Gastrocnemius medialis (tissue), 4 donors: ENCODE measurements at regions of chr17 and their contacts with region 1.

Region 1: GRCh38 chr17:17591355-17592298 is at the start of gene PEMT:
- DNase-seq: peak; percentile 97 to 98
- ATAC-seq: peak; percentile 98
- H3K4me3 ChIP-seq: peak within 1 kb of the TSS; percentile 75 to 95 (median 86)
- H3K27ac ChIP-seq: peak within 1 kb of the TSS; percentile 83 to 94 (median 91)
- H3K4me1 ChIP-seq: peaks cover 19 to 22% of the 10 kb centered on the region in 2 donors
- H3K27me3 ChIP-seq: no peaks in the 10 kb centered on the region
- CTCF ChIP-seq: peak in 1 of 5 experiments; percentile 20
- POLR2A ChIP-seq: peak; percentile 60 to 66
- total RNA-seq, gene PEMT: 32.8 to 48.2 (median 34.2) TPM

Region 2: DNA sequence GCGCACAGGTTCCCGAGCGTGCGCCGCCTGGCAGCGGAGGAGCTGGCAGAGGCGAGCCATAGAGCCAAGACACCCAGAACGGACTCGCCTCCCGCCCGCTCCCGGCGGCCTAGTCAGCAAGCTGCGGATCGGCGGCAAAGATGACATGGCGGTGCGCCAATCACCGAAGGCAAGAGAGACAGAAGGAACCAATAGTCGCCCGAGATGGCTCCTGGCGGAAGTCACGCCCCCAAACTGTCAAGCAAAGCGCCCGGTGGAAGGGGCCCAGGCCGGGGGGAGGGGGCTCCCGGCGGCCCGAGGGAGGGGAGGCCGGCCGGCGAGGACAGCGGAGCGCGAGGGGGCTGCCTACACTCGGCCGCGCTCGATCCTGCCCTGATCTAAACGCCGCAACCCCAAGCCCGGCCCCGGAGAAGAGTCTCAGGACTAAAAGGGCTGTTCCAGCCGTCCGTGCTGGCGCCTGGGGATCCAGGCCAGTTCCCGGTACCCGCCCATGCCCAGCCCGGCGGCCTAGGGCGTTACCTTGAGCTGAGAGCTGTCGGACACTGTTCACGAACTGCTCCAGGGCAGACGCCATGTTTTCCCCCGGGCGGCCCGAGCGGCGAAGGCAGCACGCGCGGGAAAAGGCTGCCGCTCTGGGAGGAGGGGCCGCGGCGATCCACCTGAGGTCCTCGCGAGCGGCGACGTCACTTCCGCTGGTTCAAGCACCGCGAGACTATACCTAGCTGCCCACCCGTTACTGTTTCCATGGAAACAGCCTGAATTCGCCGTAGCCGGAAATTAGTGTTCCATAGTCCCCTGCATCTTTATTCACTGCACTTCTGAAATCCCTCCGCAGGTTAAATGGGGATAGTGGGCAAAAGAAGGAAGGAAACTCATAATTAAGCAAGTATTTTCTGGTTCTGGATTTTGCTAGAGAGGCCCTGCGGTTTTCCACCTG is 310.7 kb before region 1 on chr17 and contains the start of gene COPS3:
- in situ Hi-C with region 1: no loop called
- intact Hi-C with region 1: loop called (anchors 1 kb)
- DNase-seq: peak; percentile 98 to 99
- ATAC-seq: peak; percentile 95
- H3K4me3 ChIP-seq: peak within 1 kb of the TSS; percentile 88 to 99 (median 92)
- H3K27ac ChIP-seq: peak within 1 kb of the TSS; percentile 97 to 100 (median 100)
- H3K4me1 ChIP-seq: peaks cover 39 to 41% of the 10 kb centered on the region in 2 donors
- H3K27me3 ChIP-seq: no peaks in the 10 kb centered on the region
- CTCF ChIP-seq: no peak
- POLR2A ChIP-seq: peak; percentile 90 to 91
- total RNA-seq, gene COPS3: 145 to 249 (median 175) TPM

Region 3: DNA sequence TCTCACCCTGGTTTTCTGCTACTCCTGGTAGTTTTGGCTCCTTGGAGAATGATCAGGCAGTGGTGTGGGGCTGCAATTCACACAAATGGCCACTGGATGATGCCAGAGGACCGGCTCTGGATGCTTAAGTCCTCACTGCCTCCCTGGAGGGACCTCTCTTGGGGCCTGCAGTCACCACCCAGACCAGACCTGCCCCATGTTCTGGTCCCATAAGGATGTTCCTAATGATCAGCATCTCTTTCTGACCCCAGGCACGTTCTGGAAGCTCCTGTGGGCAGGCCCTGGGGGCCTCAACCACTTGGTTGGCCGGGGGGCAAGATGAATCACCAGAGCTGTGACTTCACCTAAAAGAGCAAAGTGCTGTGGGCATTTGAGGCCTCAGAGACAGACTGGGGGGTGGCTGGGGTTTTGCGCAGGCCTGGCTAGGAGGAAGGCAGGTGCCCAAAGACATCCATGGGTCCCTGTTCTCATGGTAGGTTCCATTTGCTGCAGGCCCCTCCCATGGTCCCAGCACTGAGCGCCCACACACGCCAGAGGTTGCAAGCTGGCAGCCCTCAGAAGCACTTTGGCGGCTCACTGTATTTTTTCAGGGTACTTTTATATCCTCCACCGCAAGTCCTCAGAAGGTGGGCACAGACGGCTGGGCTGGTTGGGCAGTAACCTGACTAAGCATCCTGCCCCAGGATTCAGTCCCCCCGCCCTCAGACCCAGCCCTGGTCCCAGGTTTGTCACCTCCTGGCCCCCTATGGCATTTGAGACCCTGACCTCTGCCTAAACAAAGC is 235.3 kb before region 1 on chr17:
- in situ Hi-C with region 1: no loop called
- intact Hi-C with region 1: loop called (anchors 5 kb)
- DNase-seq: peak; percentile 55 to 77
- ATAC-seq: peak; percentile 79 to 83
- H3K4me3 ChIP-seq: no peak overlapping the region
- H3K27ac ChIP-seq: no peak overlapping the region
- H3K4me1 ChIP-seq: peaks cover 0 to 5% of the 10 kb centered on the region in 2 donors
- H3K27me3 ChIP-seq: no peaks in the 10 kb centered on the region
- CTCF ChIP-seq: peak; percentile 98 to 100 (median 99)
- POLR2A ChIP-seq: no peak

Region 4: DNA sequence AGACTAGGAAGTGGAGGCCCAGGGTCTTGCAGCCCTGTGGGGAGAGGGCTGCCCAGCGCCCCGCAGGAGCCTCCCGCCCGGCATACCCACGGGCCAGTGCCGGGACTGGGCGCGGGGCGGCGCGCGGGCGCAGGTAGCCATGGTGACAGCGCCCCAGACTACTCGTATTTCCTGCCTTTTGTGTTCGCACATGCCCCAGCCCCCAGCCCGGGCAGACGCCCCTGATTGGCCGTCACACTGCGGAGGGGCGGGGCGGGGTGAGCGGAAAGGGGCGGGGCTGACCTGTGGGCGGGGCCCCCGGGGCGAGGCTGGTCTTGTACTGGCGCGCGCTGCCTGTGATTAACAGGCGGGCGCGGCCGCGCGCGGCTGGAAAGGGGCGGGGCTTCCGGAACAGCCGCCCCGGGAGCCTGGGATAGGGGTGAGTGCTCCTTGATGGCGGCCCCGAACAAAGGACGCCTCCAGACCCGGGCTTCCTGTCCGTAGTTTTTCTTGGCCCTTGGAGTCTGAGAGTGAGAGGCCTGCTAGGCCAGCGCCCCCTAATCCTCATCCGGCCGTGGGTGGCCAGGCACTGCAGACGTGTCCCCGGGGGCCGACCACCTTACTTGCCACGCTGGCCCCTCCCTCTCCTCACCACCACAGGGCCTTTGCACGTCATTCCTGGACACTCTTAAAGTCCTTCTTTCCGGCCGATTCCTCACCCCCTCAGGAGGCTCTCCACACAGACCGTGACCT is 160.6 kb after region 1 on chr17:
- in situ Hi-C with region 1: no loop called
- intact Hi-C with region 1: loop called (anchors 1 kb)
- DNase-seq: peak; percentile 92 to 95
- ATAC-seq: peak; percentile 84 to 87
- H3K4me3 ChIP-seq: peak overlapping the region; percentile 49 to 72 (median 66)
- H3K27ac ChIP-seq: peak overlapping the region; percentile 77 to 91 (median 88)
- H3K4me1 ChIP-seq: peaks cover 16 to 24% of the 10 kb centered on the region in 2 donors
- H3K27me3 ChIP-seq: no peaks in the 10 kb centered on the region
- CTCF ChIP-seq: peak in 1 of 5 experiments; percentile 32
- POLR2A ChIP-seq: peak; percentile 67 to 75